ENCODE measurements at regions of chr19 and their contacts with region 1.

Region 1: GRCh38 chr19:41263850-41264580 is at the start of gene HNRNPUL1:
- H3K4me3 Mint-ChIP-seq: peak within 1 kb of the TSS; percentile 96
- H3K27ac Mint-ChIP-seq: peak within 1 kb of the TSS; percentile 99
- H3K4me1 Mint-ChIP-seq: peaks cover 48% of the 10 kb centered on the region
- H3K27me3 Mint-ChIP-seq: peaks cover 3% of the 10 kb centered on the region

Region 2: GRCh38 chr19:41206926-41207750 is 56.9 kb before region 1 on chr19:
- intact Hi-C with region 1: loop called (anchors 1 kb)
- H3K4me3 Mint-ChIP-seq: no peak overlapping the region
- H3K27ac Mint-ChIP-seq: no peak overlapping the region
- H3K4me1 Mint-ChIP-seq: peaks cover 34% of the 10 kb centered on the region
- H3K27me3 Mint-ChIP-seq: no peaks in the 10 kb centered on the region

Region 3: GRCh38 chr19:41218615-41219507 is 45.2 kb before region 1 on chr19 and contains the start of gene AXL:
- intact Hi-C with region 1: no loop called
- H3K4me3 Mint-ChIP-seq: no peak within 1 kb of the TSS
- H3K27ac Mint-ChIP-seq: peak within 1 kb of the TSS; percentile 16
- H3K4me1 Mint-ChIP-seq: peaks cover 53% of the 10 kb centered on the region
- H3K27me3 Mint-ChIP-seq: peaks cover 70% of the 10 kb centered on the region

Region 4: DNA sequence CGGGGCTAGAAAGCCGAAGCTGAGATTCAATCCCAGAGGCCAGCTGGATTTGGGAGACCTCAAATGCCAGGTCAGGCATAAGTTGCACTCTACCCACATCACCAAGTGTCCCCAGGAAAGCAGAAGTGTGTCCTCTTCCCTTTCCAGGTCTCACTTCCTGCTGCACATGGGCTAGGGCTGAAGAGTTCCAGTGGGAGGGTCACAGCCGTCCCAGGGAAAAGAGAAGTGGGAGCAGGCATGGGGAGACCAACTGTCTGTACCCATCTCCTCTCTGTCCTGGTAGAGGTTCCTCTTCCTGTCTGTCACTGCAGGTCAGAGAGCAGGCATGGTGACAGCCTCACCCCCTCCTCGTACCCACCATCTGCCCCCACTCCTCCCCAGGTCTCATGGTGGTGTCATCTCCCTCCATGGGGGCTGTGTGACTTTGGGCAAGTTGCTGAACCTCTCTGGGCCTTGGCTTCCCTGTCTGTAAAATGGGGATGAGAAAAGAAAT is 30.2 kb before region 1 on chr19:
- intact Hi-C with region 1: loop called (anchors 2 kb)
- H3K4me3 Mint-ChIP-seq: no peak overlapping the region
- H3K27ac Mint-ChIP-seq: peak overlapping the region; percentile 71
- H3K4me1 Mint-ChIP-seq: peaks cover 25% of the 10 kb centered on the region
- H3K27me3 Mint-ChIP-seq: peaks cover 5% of the 10 kb centered on the region

Region 5: GRCh38 chr19:41298348-41298964 is 34.4 kb after region 1 on chr19:
- intact Hi-C with region 1: loop called (anchors 1 kb)
- H3K4me3 Mint-ChIP-seq: peak overlapping the region; percentile 39
- H3K27ac Mint-ChIP-seq: peak overlapping the region; percentile 83
- H3K4me1 Mint-ChIP-seq: peaks cover 66% of the 10 kb centered on the region
- H3K27me3 Mint-ChIP-seq: no peaks in the 10 kb centered on the region

Region 6: GRCh38 chr19:41327576-41328156 is 63.7 kb after region 1 on chr19:
- intact Hi-C with region 1: no loop called
- H3K4me3 Mint-ChIP-seq: peak overlapping the region; percentile 76
- H3K27ac Mint-ChIP-seq: peak overlapping the region; percentile 98
- H3K4me1 Mint-ChIP-seq: peaks cover 87% of the 10 kb centered on the region
- H3K27me3 Mint-ChIP-seq: no peaks in the 10 kb centered on the region